Heart left ventricle (tissue), 16 donors: ENCODE measurements at regions of chr6 and their contacts with region 1.

Region 1: DNA sequence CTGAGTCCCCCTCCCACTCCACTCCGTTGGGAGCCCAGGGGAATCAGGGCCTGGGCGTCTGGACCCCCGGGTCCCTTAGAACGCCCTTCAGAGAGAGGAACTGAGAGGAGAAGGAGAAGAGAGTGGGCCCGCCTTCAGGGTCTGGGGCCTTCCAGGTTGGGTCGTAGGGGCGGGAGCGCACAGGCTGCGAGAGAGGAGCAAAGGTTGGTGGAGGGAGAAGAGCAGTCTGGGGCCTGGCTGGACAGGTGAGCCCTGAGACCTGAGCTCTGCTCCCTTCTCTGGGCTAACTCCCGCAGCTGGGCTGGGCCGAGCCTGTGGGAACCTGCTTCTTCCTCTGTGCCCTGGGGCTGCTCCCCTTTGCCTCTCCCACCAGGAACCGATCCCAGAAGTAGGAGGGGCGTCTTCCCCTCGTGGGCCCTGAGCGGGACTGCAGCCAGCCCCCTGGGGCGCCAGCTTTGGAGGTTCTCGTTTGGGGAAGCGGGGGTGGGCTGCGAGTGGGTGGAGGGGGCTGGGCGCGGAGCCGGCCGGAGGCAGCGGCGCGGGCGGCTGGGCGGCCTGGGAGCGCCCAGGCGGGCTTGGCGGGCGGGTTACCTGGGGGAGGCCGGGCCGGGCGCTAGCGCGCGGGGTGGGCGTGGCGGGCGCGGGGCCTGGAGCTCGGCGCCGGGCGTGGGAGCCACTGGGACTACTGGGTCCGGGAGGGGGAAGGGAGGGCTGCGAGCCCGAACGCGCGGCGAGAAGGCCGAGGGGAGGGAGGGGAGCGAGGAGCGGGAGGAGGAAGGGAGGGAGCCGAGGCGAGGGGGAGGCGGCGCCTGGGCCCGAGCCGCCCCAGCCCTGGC is at the start of gene DDR1:
- DNase-seq: peak; percentile 79 to 87 (median 84)
- ATAC-seq: peak; percentile 7 to 76 (median 70)
- H3K4me3 ChIP-seq: peak within 1 kb of the TSS; percentile 37 to 93 (median 74)
- H3K27ac ChIP-seq: peak within 1 kb of the TSS; percentile 11 to 88 (median 80)
- H3K4me1 ChIP-seq: peaks cover 9 to 54% (median 34%) of the 10 kb centered on the region in 12 donors
- H3K27me3 ChIP-seq: peaks cover 0 to 3% (median 0%) of the 10 kb centered on the region in 9 donors
- CTCF ChIP-seq: no peak
- POLR2A ChIP-seq: no peak
- total RNA-seq, gene DDR1: 18.0 to 50.0 (median 38.4) TPM

Region 2: GRCh38 chr6:29976588-29977424 is 907.1 kb before region 1 on chr6:
- intact Hi-C with region 1: no loop called
- DNase-seq: peak; percentile 91 to 93 (median 92)
- ATAC-seq: peak; percentile 89 to 96 (median 95)
- H3K4me3 ChIP-seq: peak overlapping the region; percentile 28 to 69 (median 60)
- H3K27ac ChIP-seq: peak overlapping the region; percentile 87 to 99 (median 95)
- H3K4me1 ChIP-seq: peaks cover 0 to 28% (median 17%) of the 10 kb centered on the region in 12 donors
- H3K27me3 ChIP-seq: peaks cover 0 to 11% (median 0%) of the 10 kb centered on the region in 9 donors
- CTCF ChIP-seq: peak in 7 of 12 donors; percentile 12 to 48 (median 32)
- POLR2A ChIP-seq: peak in 1 of 2 donors; percentile 55

Region 3: GRCh38 chr6:30686908-30687658 is 196.8 kb before region 1 on chr6:
- intact Hi-C with region 1: loop called in 3 of 10 experiments (anchors 5 to 10 kb)
- DNase-seq: peak; percentile 97 to 99 (median 98)
- ATAC-seq: peak; percentile 71 to 85 (median 79)
- H3K4me3 ChIP-seq: peak overlapping the region; percentile 52 to 96 (median 74)
- H3K27ac ChIP-seq: peak overlapping the region; percentile 92 to 100 (median 98)
- H3K4me1 ChIP-seq: peaks cover 4 to 78% (median 46%) of the 10 kb centered on the region in 12 donors
- H3K27me3 ChIP-seq: no peaks in the 10 kb centered on the region
- CTCF ChIP-seq: no peak
- POLR2A ChIP-seq: no peak

Region 4: DNA sequence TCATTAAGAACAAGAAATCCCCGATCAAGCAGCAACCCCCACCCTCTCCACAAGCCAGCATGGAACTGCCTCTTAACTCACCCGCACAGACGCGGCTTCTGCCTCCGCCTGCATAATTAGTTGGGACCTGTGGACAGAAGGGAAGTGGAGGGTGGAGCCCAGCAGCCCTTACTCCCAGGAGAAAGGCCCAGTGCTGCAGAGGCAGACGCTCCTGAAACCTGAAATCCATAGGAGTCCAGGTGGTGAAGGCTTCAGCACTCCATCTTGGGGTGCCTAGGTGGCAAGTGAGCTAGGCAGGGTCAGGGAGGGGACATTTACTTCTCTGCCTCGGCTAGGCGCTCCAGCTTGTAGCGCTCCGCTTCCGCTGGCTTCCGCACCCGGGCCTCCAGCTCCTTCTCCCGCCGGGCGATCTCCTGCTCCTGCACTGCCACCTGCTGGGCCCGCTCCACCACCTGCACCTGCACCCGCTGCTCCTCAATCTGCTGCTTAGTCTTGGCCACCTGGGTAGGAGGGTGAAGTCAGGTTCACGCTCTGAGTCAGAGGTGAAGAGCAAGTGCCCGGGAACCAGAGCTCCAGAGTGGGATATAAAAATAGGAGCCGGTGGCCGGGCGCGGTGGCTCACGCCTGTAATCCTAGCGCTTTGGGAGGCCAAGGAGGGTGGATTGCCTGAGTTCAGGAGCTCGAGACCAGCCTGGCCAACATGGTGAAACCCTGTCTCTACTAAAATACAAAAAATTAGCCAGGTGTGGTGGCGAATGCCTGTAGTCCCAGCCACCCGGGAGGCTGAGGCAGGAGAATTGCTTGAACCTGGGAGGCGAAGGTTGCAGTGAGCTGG is 153.1 kb before region 1 on chr6:
- intact Hi-C with region 1: loop called in 1 of 10 experiments (anchors 10 kb)
- DNase-seq: peak; percentile 65 to 82 (median 71)
- ATAC-seq: peak; percentile 58 to 85 (median 75)
- H3K4me3 ChIP-seq: peak overlapping the region in 1 of 12 donors; percentile 30
- H3K27ac ChIP-seq: peak overlapping the region in 5 of 12 donors; percentile 15 to 64 (median 29)
- H3K4me1 ChIP-seq: peaks cover 0 to 25% (median 12%) of the 10 kb centered on the region in 12 donors
- H3K27me3 ChIP-seq: no peaks in the 10 kb centered on the region
- CTCF ChIP-seq: peak; percentile 50 to 75 (median 60)
- POLR2A ChIP-seq: no peak

Region 5: GRCh38 chr6:30793521-30794194 is 90.2 kb before region 1 on chr6:
- intact Hi-C with region 1: no loop called
- DNase-seq: no peak
- ATAC-seq: peak in 3 of 4 donors; percentile 50 to 71 (median 58)
- H3K4me3 ChIP-seq: peak overlapping the region in 1 of 12 donors; percentile 13
- H3K27ac ChIP-seq: peak overlapping the region; percentile 59 to 96 (median 71)
- H3K4me1 ChIP-seq: peaks cover 0 to 34% (median 3%) of the 10 kb centered on the region in 12 donors
- H3K27me3 ChIP-seq: no peaks in the 10 kb centered on the region
- CTCF ChIP-seq: no peak
- POLR2A ChIP-seq: no peak